ENCODE measurements at regions of chr9 and their contacts with region 1.

Region 1: DNA sequence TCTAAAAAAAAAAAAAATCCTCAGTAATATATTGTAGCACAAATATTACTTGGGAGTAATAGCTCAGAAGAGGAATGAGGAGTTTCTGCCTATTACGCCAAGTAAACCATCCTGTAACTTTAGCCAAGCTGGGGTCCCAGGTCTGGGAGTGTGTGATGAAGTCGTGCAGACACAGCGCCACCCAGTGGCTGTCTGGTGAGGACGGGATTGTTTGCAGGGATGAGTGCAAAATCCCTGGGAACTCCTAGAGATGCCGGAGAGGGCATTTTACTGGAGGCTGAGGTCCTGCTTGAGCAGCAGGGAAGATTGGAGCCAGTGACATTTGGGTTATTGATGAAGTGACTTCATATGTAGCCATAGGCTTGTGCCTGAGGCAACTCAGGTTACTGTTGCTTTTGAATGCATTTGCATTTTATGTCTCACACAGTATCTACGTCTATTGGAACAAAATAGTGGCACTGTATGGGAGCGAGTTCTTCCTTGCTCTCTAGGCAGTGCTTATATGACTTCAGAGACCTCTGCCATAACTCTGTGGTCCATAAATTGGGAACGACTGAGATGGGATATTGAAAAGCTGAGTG is 72.8 kb downstream of the PSAT1 start:
- DNase-seq: peak; percentile 80
- ATAC-seq: no peak

Region 2: GRCh38 chr9:78213712-78214111 is 156.0 kb before region 1 on chr9:
- intact Hi-C with region 1: no loop called
- DNase-seq: no peak
- ATAC-seq: no peak

Region 3: DNA sequence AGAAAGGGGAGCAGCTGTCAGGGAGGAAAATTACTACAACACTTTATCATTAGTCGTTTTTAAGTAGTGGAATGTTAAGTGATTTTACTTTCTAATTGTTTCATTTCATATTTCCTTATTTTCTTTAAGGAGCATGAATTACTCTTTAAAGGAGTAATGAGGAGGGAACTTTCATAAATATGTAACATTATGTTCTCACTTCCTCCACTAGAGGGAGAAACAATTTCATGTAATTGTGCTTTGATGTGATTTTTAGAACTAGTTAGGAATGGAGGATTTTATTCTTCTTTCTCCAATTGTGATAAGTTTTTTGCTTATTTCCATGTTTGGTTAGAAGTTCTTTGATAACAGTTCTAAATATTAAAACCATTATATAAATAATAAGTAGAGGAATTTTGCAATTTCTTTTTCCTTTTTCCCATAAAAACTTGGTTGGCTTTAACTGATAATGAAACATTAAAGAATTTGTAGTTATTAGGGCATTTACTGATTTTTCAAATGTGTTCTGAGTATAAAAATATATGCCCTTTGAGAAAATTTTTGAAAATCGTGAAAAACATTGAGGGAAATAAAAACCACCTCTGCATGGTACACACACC is 108.2 kb before region 1 on chr9:
- intact Hi-C with region 1: loop called (anchors 2 kb)
- DNase-seq: no peak
- ATAC-seq: no peak

Region 4: DNA sequence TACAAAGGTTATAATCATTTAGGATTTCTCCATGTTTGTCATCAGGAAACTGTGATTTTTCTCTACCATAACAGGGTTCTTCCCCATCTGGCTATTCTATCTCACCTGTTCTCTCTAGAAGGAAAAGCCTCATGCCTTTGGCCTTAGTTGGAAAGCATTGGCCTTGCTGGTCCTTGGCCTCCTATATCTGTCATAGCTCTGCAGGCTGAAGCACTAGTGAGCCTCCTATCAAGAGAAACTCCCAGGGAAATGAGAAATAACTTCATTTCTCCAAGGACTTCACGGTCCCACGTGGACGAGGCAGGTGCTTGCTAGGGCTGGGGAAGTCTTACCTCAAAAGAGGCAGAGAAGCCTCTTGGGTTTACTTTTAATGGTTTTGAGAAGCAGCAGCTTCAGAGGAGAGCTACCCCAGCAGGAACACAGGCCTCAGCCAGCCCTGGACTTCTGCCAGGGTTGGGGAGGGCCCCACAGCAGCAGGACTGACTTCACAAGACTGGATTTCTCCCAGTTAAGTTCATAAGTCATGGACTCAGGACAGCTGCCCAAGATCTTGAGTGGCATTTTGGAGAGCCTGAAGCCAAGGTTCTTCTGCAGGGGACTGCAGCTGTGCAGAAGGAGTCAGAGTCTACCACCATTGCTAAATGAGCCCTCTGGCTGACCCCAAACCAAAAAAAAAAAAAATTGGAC is 88.6 kb before region 1 on chr9:
- intact Hi-C with region 1: no loop called
- DNase-seq: peak; percentile 86
- ATAC-seq: peak; percentile 96

Region 5: GRCh38 chr9:78515108-78515507 is 145.4 kb after region 1 on chr9:
- intact Hi-C with region 1: no loop called
- DNase-seq: no peak
- ATAC-seq: no peak

Region 6: DNA sequence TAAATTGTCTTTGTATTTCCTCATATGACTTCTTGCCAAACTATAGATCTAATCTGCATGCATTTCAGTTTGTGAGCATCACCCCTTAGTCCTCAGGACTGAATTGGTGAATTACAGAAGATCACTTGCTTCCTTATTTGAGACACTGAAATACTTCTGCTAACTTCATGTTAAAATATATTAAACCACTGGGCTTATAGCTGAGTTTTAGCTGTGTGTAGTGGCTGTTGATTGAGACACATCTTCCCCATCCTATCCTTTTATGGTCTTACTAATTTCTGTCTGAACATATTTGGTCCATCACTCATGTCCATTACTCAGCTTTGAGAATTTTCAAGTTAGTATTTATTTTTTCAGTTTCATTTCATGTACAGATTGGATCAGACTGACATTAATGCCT is 223.1 kb after region 1 on chr9:
- intact Hi-C with region 1: no loop called
- DNase-seq: no peak
- ATAC-seq: no peak

Measured in Right ventricle myocardium inferior (tissue), 1 donor.